ENCODE measurements at regions of chr22 and their contacts with region 1.

Region 1: GRCh38 chr22:20899827-20900423 is 17.3 kb upstream of the CRKL start:
- DNase-seq: no peak
- H3K4me3 ChIP-seq: no peak overlapping the region
- H3K27ac ChIP-seq: no peak overlapping the region
- H3K4me1 ChIP-seq: no peaks in the 10 kb centered on the region
- H3K27me3 ChIP-seq: no peaks in the 10 kb centered on the region
- CTCF ChIP-seq: no peak

Region 2: DNA sequence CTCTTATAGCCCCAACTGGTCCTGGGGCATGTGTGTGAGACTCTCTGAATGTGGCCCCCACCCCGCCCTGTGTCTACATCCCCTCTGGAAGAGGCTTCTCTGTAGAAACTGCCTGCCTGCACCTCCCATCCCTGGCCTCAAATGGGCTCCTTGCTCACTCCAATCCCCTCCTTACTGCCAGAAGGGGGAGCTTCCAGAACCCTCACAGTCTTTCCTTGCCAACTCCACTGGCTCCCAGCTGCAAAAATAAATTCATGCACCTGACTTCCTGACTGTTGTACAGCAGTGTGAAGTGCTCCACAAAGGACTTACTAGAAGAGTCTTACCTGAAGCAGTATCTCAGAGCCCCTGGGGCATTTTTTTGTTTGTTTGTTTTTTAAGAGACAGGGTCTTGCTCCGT is 141.2 kb before region 1 on chr22:
- intact Hi-C with region 1: no loop called
- DNase-seq: no peak
- H3K4me3 ChIP-seq: no peak overlapping the region
- H3K27ac ChIP-seq: no peak overlapping the region
- H3K4me1 ChIP-seq: no peaks in the 10 kb centered on the region
- H3K27me3 ChIP-seq: no peaks in the 10 kb centered on the region
- CTCF ChIP-seq: no peak

Region 3: DNA sequence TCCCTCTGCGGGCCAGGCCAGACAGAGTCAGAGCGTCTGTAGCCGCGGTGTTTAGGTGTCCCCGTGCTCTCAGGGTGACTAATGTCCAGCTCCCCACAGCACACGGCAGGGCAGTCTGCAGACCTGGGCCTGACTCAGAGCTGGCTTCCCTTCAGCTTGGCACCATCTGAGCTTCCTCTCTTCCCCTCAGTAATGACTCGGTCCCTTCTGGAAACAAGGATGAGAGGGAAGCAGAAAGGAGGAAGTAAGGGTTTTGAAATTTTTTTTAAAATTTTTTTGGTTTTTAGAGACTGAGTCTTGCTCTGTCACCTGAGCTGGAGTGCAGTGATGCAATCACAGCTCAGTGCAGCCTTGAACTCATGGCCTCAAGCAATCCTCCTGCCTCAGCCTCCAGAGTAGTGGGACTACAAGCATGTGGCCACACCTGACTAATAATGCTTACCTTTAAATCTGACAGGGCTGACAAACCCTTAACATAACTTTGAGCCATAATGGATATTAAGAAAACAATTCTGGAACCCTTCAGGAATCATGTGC is 174.3 kb after region 1 on chr22:
- intact Hi-C with region 1: loop called (anchors 10 kb)
- DNase-seq: no peak
- H3K4me3 ChIP-seq: no peak overlapping the region
- H3K27ac ChIP-seq: no peak overlapping the region
- H3K4me1 ChIP-seq: no peaks in the 10 kb centered on the region
- H3K27me3 ChIP-seq: no peaks in the 10 kb centered on the region
- CTCF ChIP-seq: no peak